CD4-positive, alpha-beta T cell (primary cell): ENCODE measurements at regions of chr5 and their contacts with region 1.

Region 1: DNA sequence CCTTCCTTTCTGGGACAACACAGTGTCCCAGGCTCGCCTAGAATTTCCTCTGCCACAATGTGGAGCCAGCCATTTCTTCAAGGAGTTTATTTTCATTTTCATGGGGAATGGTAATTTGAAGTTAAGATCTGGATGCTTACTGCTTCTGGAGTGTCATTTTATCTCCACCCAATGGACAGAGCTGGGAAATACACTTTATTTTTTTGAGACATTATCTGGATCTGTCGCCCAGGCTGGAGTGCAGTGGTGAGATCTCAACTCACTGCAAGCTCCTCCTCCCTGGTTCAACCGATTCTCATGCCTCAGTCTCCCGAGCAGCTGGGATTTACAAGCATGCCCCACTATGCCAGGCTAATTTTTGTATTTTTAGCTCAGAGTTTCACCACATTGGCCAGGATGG is 12.7 kb upstream of the THG1L start:
- DNase-seq: peak in 5 of 14 experiments; percentile 13 to 74 (median 66)
- ATAC-seq: peak; percentile 81
- H3K4me3 ChIP-seq: no peak overlapping the region
- H3K4me3 Mint-ChIP-seq: no peak overlapping the region
- H3K27ac ChIP-seq: no peak overlapping the region
- H3K27ac Mint-ChIP-seq: no peak overlapping the region
- H3K4me1 ChIP-seq: peaks cover 17% of the 10 kb centered on the region
- H3K4me1 Mint-ChIP-seq: peaks cover 18% of the 10 kb centered on the region
- H3K27me3 ChIP-seq: no peaks in the 10 kb centered on the region
- H3K27me3 Mint-ChIP-seq: no peaks in the 10 kb centered on the region
- CTCF ChIP-seq: peak; percentile 68

Region 2: DNA sequence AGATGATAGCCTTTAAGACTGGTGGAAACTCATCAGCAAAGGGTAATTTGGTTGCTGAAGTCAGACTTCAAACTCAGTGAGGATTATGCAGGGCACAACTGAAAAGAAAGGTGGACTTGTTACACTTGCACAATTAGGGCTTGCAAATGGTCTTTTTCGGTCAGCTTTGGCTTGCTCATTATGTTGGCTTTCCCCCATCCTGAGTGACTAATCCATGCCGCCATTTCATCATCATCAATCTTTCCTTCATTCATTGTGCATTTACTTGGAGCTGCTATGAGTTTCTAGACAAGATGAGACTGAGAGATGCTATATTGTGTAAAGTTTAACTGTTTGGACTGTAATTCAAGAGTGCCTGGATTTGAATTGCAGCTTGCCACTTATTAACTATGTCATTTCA is 1003.2 kb before region 1 on chr5:
- CTCF ChIA-PET with region 1: no interaction called
- POLR2A ChIA-PET with region 1: no interaction called
- intact Hi-C with region 1: no loop called
- DNase-seq: no peak
- ATAC-seq: no peak
- H3K4me3 ChIP-seq: no peak overlapping the region
- H3K4me3 Mint-ChIP-seq: no peak overlapping the region
- H3K27ac ChIP-seq: no peak overlapping the region
- H3K27ac Mint-ChIP-seq: no peak overlapping the region
- H3K4me1 ChIP-seq: no peaks in the 10 kb centered on the region
- H3K4me1 Mint-ChIP-seq: no peaks in the 10 kb centered on the region
- H3K27me3 ChIP-seq: no peaks in the 10 kb centered on the region
- H3K27me3 Mint-ChIP-seq: peaks cover 28% of the 10 kb centered on the region
- CTCF ChIP-seq: no peak

Region 3: GRCh38 chr5:157328277-157328912 is 390.1 kb before region 1 on chr5:
- CTCF ChIA-PET with region 1: interaction called, 5 read pairs
- POLR2A ChIA-PET with region 1: no interaction called
- intact Hi-C with region 1: loop called in 1 of 2 experiments (anchors 1 kb)
- DNase-seq: peak in 13 of 14 experiments; percentile 28 to 86 (median 45)
- ATAC-seq: peak; percentile 88
- H3K4me3 ChIP-seq: no peak overlapping the region
- H3K4me3 Mint-ChIP-seq: peak overlapping the region; percentile 70
- H3K27ac ChIP-seq: peak overlapping the region; percentile 12 to 71
- H3K27ac Mint-ChIP-seq: peak overlapping the region; percentile 89
- H3K4me1 ChIP-seq: peaks cover 32% of the 10 kb centered on the region
- H3K4me1 Mint-ChIP-seq: peaks cover 41% of the 10 kb centered on the region
- H3K27me3 ChIP-seq: no peaks in the 10 kb centered on the region
- H3K27me3 Mint-ChIP-seq: no peaks in the 10 kb centered on the region
- CTCF ChIP-seq: peak; percentile 89

Region 4: GRCh38 chr5:157342822-157343402 is 375.6 kb before region 1 on chr5:
- CTCF ChIA-PET with region 1: no interaction called
- POLR2A ChIA-PET with region 1: no interaction called
- intact Hi-C with region 1: loop called in 1 of 2 experiments (anchors 5 kb)
- DNase-seq: peak in 8 of 14 experiments; percentile 7 to 53 (median 22)
- ATAC-seq: no peak
- H3K4me3 ChIP-seq: no peak overlapping the region
- H3K4me3 Mint-ChIP-seq: no peak overlapping the region
- H3K27ac ChIP-seq: no peak overlapping the region
- H3K27ac Mint-ChIP-seq: no peak overlapping the region
- H3K4me1 ChIP-seq: peaks cover 16% of the 10 kb centered on the region
- H3K4me1 Mint-ChIP-seq: peaks cover 23% of the 10 kb centered on the region
- H3K27me3 ChIP-seq: no peaks in the 10 kb centered on the region
- H3K27me3 Mint-ChIP-seq: no peaks in the 10 kb centered on the region
- CTCF ChIP-seq: peak; percentile 63

Region 5: DNA sequence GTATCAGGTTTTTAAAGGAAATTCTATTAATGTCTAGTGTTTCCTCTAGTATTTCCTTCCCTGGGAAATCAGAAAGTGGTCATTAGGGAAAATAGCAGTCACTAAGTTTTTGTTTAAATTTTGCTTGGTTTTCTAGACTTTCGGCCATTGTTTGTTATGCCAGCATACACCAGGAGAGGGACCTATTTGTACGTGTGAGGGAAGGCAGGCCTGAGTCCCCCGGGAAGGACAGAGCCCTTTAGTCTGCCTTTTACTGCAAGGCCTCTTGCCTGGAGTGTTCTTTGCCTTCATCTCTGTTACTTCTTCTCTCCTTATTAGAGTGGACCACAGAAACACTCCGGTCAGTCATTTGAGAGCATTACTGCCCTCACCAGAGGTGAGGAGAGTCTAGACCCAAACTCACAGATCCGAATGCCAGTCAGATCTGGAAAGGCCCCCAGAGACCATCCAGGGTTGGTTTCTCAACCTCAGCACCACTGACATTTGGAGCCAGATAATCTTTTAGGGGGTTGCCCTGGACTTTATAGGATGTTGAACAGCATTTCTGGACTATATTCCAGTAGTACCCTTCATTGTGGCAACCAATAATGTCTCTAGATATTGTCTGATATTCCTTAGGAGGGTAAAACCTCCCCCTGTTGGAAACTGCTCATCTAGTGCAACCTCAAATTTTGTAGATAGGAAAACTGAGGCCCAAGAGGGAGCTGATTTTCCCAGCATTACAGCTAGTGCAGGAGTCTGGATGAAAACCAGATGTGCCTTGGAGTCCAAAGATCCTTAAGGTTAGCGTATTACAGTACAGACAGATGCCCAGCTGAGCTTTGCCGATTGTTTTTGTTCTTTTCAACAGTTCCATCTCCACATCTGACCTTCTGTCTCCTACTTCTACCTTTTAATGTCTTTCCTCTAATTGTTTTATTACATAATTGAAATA is 351.5 kb before region 1 on chr5:
- CTCF ChIA-PET with region 1: no interaction called
- POLR2A ChIA-PET with region 1: no interaction called
- intact Hi-C with region 1: loop called in 1 of 2 experiments (anchors 2 kb)
- DNase-seq: no peak
- ATAC-seq: no peak
- H3K4me3 ChIP-seq: no peak overlapping the region
- H3K4me3 Mint-ChIP-seq: no peak overlapping the region
- H3K27ac ChIP-seq: no peak overlapping the region
- H3K27ac Mint-ChIP-seq: peak overlapping the region; percentile 63
- H3K4me1 ChIP-seq: no peaks in the 10 kb centered on the region
- H3K4me1 Mint-ChIP-seq: peaks cover 17% of the 10 kb centered on the region
- H3K27me3 ChIP-seq: no peaks in the 10 kb centered on the region
- H3K27me3 Mint-ChIP-seq: no peaks in the 10 kb centered on the region
- CTCF ChIP-seq: no peak

Region 6: GRCh38 chr5:157431544-157432200 is 286.8 kb before region 1 on chr5:
- CTCF ChIA-PET with region 1: interaction called, 4 read pairs
- POLR2A ChIA-PET with region 1: no interaction called
- intact Hi-C with region 1: loop called (anchors 1 to 2 kb)
- DNase-seq: peak in 6 of 14 experiments; percentile 2 to 77 (median 54)
- ATAC-seq: peak; percentile 82
- H3K4me3 ChIP-seq: no peak overlapping the region
- H3K4me3 Mint-ChIP-seq: no peak overlapping the region
- H3K27ac ChIP-seq: no peak overlapping the region
- H3K27ac Mint-ChIP-seq: no peak overlapping the region
- H3K4me1 ChIP-seq: no peaks in the 10 kb centered on the region
- H3K4me1 Mint-ChIP-seq: peaks cover 5% of the 10 kb centered on the region
- H3K27me3 ChIP-seq: no peaks in the 10 kb centered on the region
- H3K27me3 Mint-ChIP-seq: no peaks in the 10 kb centered on the region
- CTCF ChIP-seq: peak; percentile 56

Region 7: DNA sequence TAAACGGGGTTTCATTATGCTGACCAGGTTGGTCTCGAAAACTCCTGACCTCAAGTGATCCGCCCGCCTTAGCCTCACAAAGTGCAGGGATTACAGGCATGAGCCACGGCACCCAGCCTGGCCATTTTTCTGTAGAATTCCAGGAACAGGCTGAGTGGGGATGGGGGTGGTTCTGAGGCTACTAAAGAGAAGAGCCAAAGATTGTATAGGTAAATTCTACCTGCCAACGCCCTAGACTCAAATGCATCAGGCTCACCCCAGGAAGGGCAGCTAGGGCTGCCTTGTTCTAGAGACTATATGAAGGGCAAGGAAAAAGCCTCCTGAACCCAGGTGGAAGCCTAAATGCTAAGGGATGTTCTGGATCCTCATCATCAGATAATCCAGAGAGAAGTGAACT is 48.8 kb before region 1 on chr5:
- CTCF ChIA-PET with region 1: no interaction called
- POLR2A ChIA-PET with region 1: no interaction called
- intact Hi-C with region 1: loop called in 1 of 2 experiments (anchors 1 kb)
- DNase-seq: no peak
- ATAC-seq: no peak
- H3K4me3 ChIP-seq: no peak overlapping the region
- H3K4me3 Mint-ChIP-seq: peak overlapping the region; percentile 87
- H3K27ac ChIP-seq: no peak overlapping the region
- H3K27ac Mint-ChIP-seq: no peak overlapping the region
- H3K4me1 ChIP-seq: peaks cover 16% of the 10 kb centered on the region
- H3K4me1 Mint-ChIP-seq: peaks cover 23% of the 10 kb centered on the region
- H3K27me3 ChIP-seq: peaks cover 12 to 14% of the 10 kb centered on the region in 2 experiments
- H3K27me3 Mint-ChIP-seq: peaks cover 12% of the 10 kb centered on the region
- CTCF ChIP-seq: no peak

Region 8: GRCh38 chr5:157778121-157778805 is 59.7 kb after region 1 on chr5:
- CTCF ChIA-PET with region 1: no interaction called
- POLR2A ChIA-PET with region 1: no interaction called
- intact Hi-C with region 1: no loop called
- DNase-seq: no peak
- ATAC-seq: no peak
- H3K4me3 ChIP-seq: no peak overlapping the region
- H3K4me3 Mint-ChIP-seq: no peak overlapping the region
- H3K27ac ChIP-seq: no peak overlapping the region
- H3K27ac Mint-ChIP-seq: no peak overlapping the region
- H3K4me1 ChIP-seq: no peaks in the 10 kb centered on the region
- H3K4me1 Mint-ChIP-seq: peaks cover 5% of the 10 kb centered on the region
- H3K27me3 ChIP-seq: no peaks in the 10 kb centered on the region
- H3K27me3 Mint-ChIP-seq: no peaks in the 10 kb centered on the region
- CTCF ChIP-seq: no peak

Region 9: GRCh38 chr5:158013939-158014338 is 295.4 kb after region 1 on chr5:
- CTCF ChIA-PET with region 1: no interaction called
- POLR2A ChIA-PET with region 1: no interaction called
- intact Hi-C with region 1: no loop called
- DNase-seq: no peak
- ATAC-seq: no peak
- H3K4me3 ChIP-seq: no peak overlapping the region
- H3K4me3 Mint-ChIP-seq: no peak overlapping the region
- H3K27ac ChIP-seq: no peak overlapping the region
- H3K27ac Mint-ChIP-seq: no peak overlapping the region
- H3K4me1 ChIP-seq: no peaks in the 10 kb centered on the region
- H3K4me1 Mint-ChIP-seq: no peaks in the 10 kb centered on the region
- H3K27me3 ChIP-seq: peaks cover 0 to 6% of the 10 kb centered on the region in 2 experiments
- H3K27me3 Mint-ChIP-seq: peaks cover 21% of the 10 kb centered on the region
- CTCF ChIP-seq: no peak